ENCODE measurements at regions of chr20 and their contacts with region 1.

Region 1: DNA sequence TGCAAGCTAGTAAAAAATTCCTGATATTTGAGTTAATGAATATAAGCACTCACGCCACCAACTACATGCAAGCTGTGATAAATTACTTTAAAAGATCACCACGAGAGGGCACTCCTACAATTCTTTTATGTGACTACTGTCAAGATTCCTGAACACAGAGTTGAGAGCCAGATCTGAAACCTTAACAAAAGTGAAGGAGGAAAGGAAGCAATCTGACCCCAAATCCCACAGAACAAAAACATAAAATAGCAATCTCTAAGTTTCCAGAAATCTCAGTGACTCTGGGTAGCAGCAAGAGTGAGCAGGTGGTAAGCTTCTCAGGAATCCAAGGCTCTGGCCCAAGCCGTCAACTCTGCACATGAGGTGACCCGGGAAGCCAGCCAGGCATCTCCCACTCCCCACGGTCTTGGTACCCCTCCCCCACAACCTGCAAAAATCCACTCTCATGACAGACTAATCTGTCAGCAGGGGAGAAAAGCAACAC is 55.1 kb downstream of the STAU1 start:
- DNase-seq: peak; percentile 28
- ATAC-seq: peak; percentile 85
- H3K4me3 ChIP-seq: no peak overlapping the region
- H3K27ac ChIP-seq: no peak overlapping the region
- H3K4me1 ChIP-seq: no peaks in the 10 kb centered on the region; the same call in 1 of the 2 replicates
- H3K27me3 ChIP-seq: no peaks in the 10 kb centered on the region
- CTCF ChIP-seq: peak; percentile 31 to 63 (median 53); a peak in 5 of 6 replicates
- EP300 ChIP-seq: no peak
- POLR2A ChIP-seq: no peak
- RAD21 ChIP-seq: peak; percentile 79

Region 2: GRCh38 chr20:48995589-48995988 is 137.4 kb before region 1 on chr20:
- CTCF ChIA-PET with region 1: no interaction called
- POLR2A ChIA-PET with region 1: no interaction called
- RAD21 ChIA-PET with region 1: no interaction called
- SMC1A ChIA-PET with region 1: no interaction called
- in situ Hi-C with region 1: no loop called
- intact Hi-C with region 1: no loop called
- DNase-seq: no peak
- ATAC-seq: no peak
- H3K4me3 ChIP-seq: no peak overlapping the region
- H3K27ac ChIP-seq: no peak overlapping the region
- H3K4me1 ChIP-seq: no peaks in the 10 kb centered on the region
- H3K27me3 ChIP-seq: no peaks in the 10 kb centered on the region
- CTCF ChIP-seq: no peak
- EP300 ChIP-seq: no peak
- POLR2A ChIP-seq: no peak
- RAD21 ChIP-seq: no peak

Region 3: GRCh38 chr20:49078296-49078695 is 54.7 kb before region 1 on chr20:
- CTCF ChIA-PET with region 1: no interaction called
- POLR2A ChIA-PET with region 1: no interaction called
- RAD21 ChIA-PET with region 1: no interaction called
- SMC1A ChIA-PET with region 1: no interaction called
- in situ Hi-C with region 1: no loop called
- intact Hi-C with region 1: no loop called
- DNase-seq: no peak
- ATAC-seq: no peak
- H3K4me3 ChIP-seq: no peak overlapping the region
- H3K27ac ChIP-seq: no peak overlapping the region
- H3K4me1 ChIP-seq: no peaks in the 10 kb centered on the region
- H3K27me3 ChIP-seq: no peaks in the 10 kb centered on the region
- CTCF ChIP-seq: no peak
- EP300 ChIP-seq: no peak
- POLR2A ChIP-seq: no peak
- RAD21 ChIP-seq: no peak

Region 4: GRCh38 chr20:49161428-49162152 is 28.6 kb after region 1 on chr20:
- CTCF ChIA-PET with region 1: interaction called, 27 read pairs
- POLR2A ChIA-PET with region 1: interaction called, 5 read pairs
- RAD21 ChIA-PET with region 1: interaction called, 8 read pairs
- SMC1A ChIA-PET with region 1: interaction called, 10 read pairs
- in situ Hi-C with region 1: no loop called
- intact Hi-C with region 1: no loop called
- DNase-seq: no peak
- ATAC-seq: peak; percentile 59
- H3K4me3 ChIP-seq: no peak overlapping the region
- H3K27ac ChIP-seq: peak overlapping the region; percentile 5; the same call in 1 of the 2 replicates
- H3K4me1 ChIP-seq: peaks cover 26% of the 10 kb centered on the region
- H3K27me3 ChIP-seq: no peaks in the 10 kb centered on the region
- CTCF ChIP-seq: no peak
- EP300 ChIP-seq: no peak
- POLR2A ChIP-seq: no peak
- RAD21 ChIP-seq: no peak

Region 5: GRCh38 chr20:49166534-49167449 is 33.8 kb after region 1 on chr20:
- CTCF ChIA-PET with region 1: interaction called, 27 read pairs
- POLR2A ChIA-PET with region 1: interaction called, 5 read pairs
- RAD21 ChIA-PET with region 1: interaction called, 8 read pairs
- SMC1A ChIA-PET with region 1: interaction called, 10 read pairs
- in situ Hi-C with region 1: no loop called
- intact Hi-C with region 1: no loop called
- DNase-seq: no peak
- ATAC-seq: peak; percentile 90
- H3K4me3 ChIP-seq: peak overlapping the region; percentile 62
- H3K27ac ChIP-seq: peak overlapping the region; percentile 83
- H3K4me1 ChIP-seq: peaks cover 37% of the 10 kb centered on the region
- H3K27me3 ChIP-seq: no peaks in the 10 kb centered on the region
- CTCF ChIP-seq: no peak
- EP300 ChIP-seq: 0 out of 4 replicates have a peak, but pooled peaks of 1 of the 2 experiments have one; percentile 21
- POLR2A ChIP-seq: no peak
- RAD21 ChIP-seq: no peak

Region 6: DNA sequence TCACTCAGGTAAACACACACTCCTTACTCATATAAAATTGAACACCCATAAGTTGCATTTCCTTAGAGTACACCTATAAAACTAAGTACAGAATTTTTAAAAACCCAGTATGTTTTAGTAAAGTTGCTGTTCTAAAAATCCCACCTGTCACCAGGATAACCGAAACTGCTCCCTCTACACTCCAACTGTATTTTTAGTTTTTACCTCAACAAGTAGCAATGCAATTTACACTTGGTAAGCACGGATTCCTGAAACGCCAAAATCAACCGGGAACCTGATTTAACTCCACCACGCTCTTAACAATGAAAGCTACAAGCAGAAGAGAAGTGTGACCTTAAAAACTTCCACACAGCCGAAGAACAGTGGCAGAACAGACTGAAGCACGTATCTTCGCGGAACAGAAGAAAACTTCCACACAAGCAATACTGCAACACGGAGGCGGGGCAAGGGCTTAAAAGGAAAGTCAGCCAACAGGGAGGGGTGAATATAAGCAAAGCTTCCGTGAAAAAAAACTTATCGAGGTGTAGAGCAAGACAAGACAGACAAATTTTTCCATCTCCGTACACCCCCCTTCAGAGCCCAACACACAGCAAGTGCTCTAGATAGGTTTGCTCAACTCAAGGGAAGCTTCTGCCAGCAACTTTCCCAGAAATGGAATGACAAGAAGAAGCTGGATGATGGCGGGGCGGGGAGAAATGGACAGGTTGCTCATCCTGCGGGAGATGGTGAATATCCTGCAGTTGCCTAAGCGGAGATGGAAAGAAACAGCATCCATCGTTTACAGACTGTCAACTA is 53.7 kb after region 1 on chr20:
- CTCF ChIA-PET with region 1: interaction called, 28 read pairs
- POLR2A ChIA-PET with region 1: interaction called, 6 read pairs
- RAD21 ChIA-PET with region 1: interaction called, 10 read pairs
- SMC1A ChIA-PET with region 1: interaction called, 35 read pairs
- in situ Hi-C with region 1: no loop called
- intact Hi-C with region 1: no loop called
- DNase-seq: no peak
- ATAC-seq: peak; percentile 46
- H3K4me3 ChIP-seq: peak overlapping the region; percentile 81
- H3K27ac ChIP-seq: peak overlapping the region; percentile 83
- H3K4me1 ChIP-seq: 0 out of 2 replicates have a peak, but pooled peaks cover 3% of the 10 kb centered on the region
- H3K27me3 ChIP-seq: no peaks in the 10 kb centered on the region
- CTCF ChIP-seq: no peak
- EP300 ChIP-seq: no peak
- POLR2A ChIP-seq: no peak
- RAD21 ChIP-seq: no peak

Region 7: GRCh38 chr20:49207076-49207475 is 74.0 kb after region 1 on chr20:
- CTCF ChIA-PET with region 1: interaction called, 333 read pairs
- POLR2A ChIA-PET with region 1: interaction called, 7 read pairs
- RAD21 ChIA-PET with region 1: interaction called, 17 read pairs
- SMC1A ChIA-PET with region 1: interaction called, 16 read pairs
- in situ Hi-C with region 1: no loop called
- intact Hi-C with region 1: no loop called
- DNase-seq: no peak
- ATAC-seq: peak; percentile 83
- H3K4me3 ChIP-seq: no peak overlapping the region
- H3K27ac ChIP-seq: no peak overlapping the region
- H3K4me1 ChIP-seq: no peaks in the 10 kb centered on the region
- H3K27me3 ChIP-seq: no peaks in the 10 kb centered on the region
- CTCF ChIP-seq: peak; percentile 35 to 50 (median 40); a peak in 5 of 6 replicates
- EP300 ChIP-seq: no peak
- POLR2A ChIP-seq: no peak
- RAD21 ChIP-seq: peak; percentile 67